GM23248 (cell line): ENCODE measurements at regions of chr15 and their contacts with region 1.

Region 1: GRCh38 chr15:57640935-57641682 is 49.4 kb downstream of the MYZAP start:
- DNase-seq: peak; percentile 52
- H3K4me3 ChIP-seq: no peak overlapping the region
- H3K27ac ChIP-seq: no peak overlapping the region
- H3K4me1 ChIP-seq: no peaks in the 10 kb centered on the region
- H3K27me3 ChIP-seq: no peaks in the 10 kb centered on the region

Region 2: DNA sequence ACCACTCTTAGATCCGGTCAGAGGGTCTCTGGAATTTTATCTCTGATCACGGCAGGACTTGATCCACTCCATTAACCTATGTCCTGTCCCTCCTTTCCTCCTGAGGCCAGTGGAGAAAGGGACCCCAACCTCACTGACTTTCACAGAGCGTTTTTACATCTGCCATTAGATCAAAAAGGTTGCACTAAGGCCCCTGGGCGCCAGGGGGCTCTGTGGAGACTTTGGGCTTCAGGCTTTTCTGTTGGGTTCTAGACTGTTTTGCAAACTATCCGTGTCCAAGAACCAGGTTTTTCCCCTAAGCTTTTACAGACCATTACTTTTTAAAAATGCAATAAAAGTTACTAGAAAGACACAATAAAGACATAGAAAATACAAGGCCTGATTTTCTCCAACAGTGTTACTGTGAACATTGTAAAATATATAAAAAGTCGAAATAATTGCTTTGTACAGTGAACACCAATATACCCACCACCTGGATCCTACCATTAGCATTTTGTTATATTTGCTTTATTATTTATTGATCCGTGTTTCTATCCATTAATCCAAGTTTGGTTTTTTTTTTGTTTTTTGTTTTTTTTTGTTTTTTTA is 225.1 kb after region 1 on chr15:
- in situ Hi-C with region 1: loop called (anchors 25 kb)
- DNase-seq: peak; percentile 72
- H3K4me3 ChIP-seq: no peak overlapping the region
- H3K27ac ChIP-seq: no peak overlapping the region
- H3K4me1 ChIP-seq: peaks cover 8% of the 10 kb centered on the region
- H3K27me3 ChIP-seq: no peaks in the 10 kb centered on the region

Region 3: GRCh38 chr15:58043192-58043903 is 402.2 kb after region 1 on chr15:
- in situ Hi-C with region 1: no loop called
- DNase-seq: peak; percentile 65
- H3K4me3 ChIP-seq: no peak overlapping the region
- H3K27ac ChIP-seq: no peak overlapping the region
- H3K4me1 ChIP-seq: no peaks in the 10 kb centered on the region
- H3K27me3 ChIP-seq: peaks cover 24% of the 10 kb centered on the region